ENCODE measurements at regions of chr11 and their contacts with region 1.

Region 1: GRCh38 chr11:33970984-33971466 is 79.1 kb upstream of the LMO2 start:
- DNase-seq: peak; percentile 74 to 80 (median 75)
- H3K4me3 ChIP-seq: no peak overlapping the region
- H3K27ac ChIP-seq: no peak overlapping the region
- H3K4me1 ChIP-seq: peaks cover 2 to 8% (median 8%) of the 10 kb centered on the region in 4 experiments
- H3K27me3 ChIP-seq: no peaks in the 10 kb centered on the region

Region 2: GRCh38 chr11:33655842-33656600 is 315.0 kb before region 1 on chr11:
- CTCF ChIA-PET with region 1: no interaction called
- POLR2A ChIA-PET with region 1: no interaction called
- DNase-seq: no peak
- H3K4me3 ChIP-seq: no peak overlapping the region
- H3K27ac ChIP-seq: no peak overlapping the region
- H3K4me1 ChIP-seq: no peaks in the 10 kb centered on the region
- H3K27me3 ChIP-seq: peaks cover 0 to 5% (median 0%) of the 10 kb centered on the region in 5 experiments

Region 3: GRCh38 chr11:33857933-33858371 is 113.1 kb before region 1 on chr11:
- CTCF ChIA-PET with region 1: interaction called, 409 read pairs
- POLR2A ChIA-PET with region 1: no interaction called
- DNase-seq: peak; percentile 85 to 91 (median 87)
- H3K4me3 ChIP-seq: no peak overlapping the region
- H3K27ac ChIP-seq: no peak overlapping the region
- H3K4me1 ChIP-seq: peaks cover 0 to 39% (median 13%) of the 10 kb centered on the region in 4 experiments
- H3K27me3 ChIP-seq: no peaks in the 10 kb centered on the region

Region 4: GRCh38 chr11:33874910-33875490 is 96.0 kb before region 1 on chr11:
- CTCF ChIA-PET with region 1: interaction called, 55 read pairs
- POLR2A ChIA-PET with region 1: interaction called, 4 read pairs
- DNase-seq: no peak
- H3K4me3 ChIP-seq: peak overlapping the region in 2 of 7 experiments; percentile 50 to 52
- H3K27ac ChIP-seq: peak overlapping the region in 1 of 2 experiments; percentile 91
- H3K4me1 ChIP-seq: peaks cover 29 to 91% (median 68%) of the 10 kb centered on the region in 4 experiments
- H3K27me3 ChIP-seq: no peaks in the 10 kb centered on the region

Region 5: DNA sequence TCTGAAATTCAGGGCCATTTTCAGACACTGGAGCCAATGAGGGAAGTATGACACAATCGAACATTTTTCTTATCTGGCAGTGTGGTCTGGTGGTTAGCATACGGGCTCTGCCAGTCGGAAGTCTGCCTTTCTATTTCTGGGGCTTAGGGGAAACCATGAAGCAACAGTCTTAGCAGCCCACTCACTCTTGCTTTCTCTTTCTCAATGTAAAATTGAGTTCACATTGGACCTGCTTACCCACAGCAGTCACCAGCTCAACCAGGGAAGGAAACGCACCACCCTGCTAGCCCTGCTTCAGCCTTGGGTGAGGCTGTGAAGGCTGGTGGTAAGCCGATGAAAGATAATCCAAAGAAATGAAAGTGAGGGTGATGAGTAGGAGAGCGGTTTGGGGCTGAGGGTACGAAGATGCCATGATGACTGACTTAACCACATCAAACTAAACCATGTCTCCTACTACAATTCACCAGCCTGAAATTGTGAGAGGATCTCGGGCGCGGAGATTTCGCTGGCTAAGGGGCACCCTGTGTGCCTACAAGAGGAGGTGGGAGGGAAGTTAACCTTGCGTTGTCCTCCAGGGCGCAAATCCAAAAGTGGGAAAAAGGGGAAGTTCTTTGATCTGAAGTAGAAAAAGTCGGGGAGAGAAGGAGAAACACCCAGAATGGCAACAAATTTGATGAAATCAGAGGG is 77.2 kb before region 1 on chr11:
- CTCF ChIA-PET with region 1: interaction called, 16 read pairs
- POLR2A ChIA-PET with region 1: interaction called, 4 read pairs
- DNase-seq: peak; percentile 93 to 99 (median 98)
- H3K4me3 ChIP-seq: peak overlapping the region in 6 of 7 experiments; percentile 43 to 85 (median 60)
- H3K27ac ChIP-seq: peak overlapping the region; percentile 71 to 91
- H3K4me1 ChIP-seq: peaks cover 48 to 98% (median 88%) of the 10 kb centered on the region in 4 experiments
- H3K27me3 ChIP-seq: no peaks in the 10 kb centered on the region

Region 6: GRCh38 chr11:33936725-33937604 is 34.1 kb before region 1 on chr11:
- CTCF ChIA-PET with region 1: interaction called, 34 read pairs
- POLR2A ChIA-PET with region 1: no interaction called
- DNase-seq: peak in 2 of 3 donors; percentile 56 to 68
- H3K4me3 ChIP-seq: peak overlapping the region in 3 of 7 experiments; percentile 5 to 27 (median 6)
- H3K27ac ChIP-seq: peak overlapping the region in 1 of 2 experiments; percentile 63
- H3K4me1 ChIP-seq: peaks cover 12 to 66% (median 58%) of the 10 kb centered on the region in 4 experiments
- H3K27me3 ChIP-seq: no peaks in the 10 kb centered on the region

Region 7: DNA sequence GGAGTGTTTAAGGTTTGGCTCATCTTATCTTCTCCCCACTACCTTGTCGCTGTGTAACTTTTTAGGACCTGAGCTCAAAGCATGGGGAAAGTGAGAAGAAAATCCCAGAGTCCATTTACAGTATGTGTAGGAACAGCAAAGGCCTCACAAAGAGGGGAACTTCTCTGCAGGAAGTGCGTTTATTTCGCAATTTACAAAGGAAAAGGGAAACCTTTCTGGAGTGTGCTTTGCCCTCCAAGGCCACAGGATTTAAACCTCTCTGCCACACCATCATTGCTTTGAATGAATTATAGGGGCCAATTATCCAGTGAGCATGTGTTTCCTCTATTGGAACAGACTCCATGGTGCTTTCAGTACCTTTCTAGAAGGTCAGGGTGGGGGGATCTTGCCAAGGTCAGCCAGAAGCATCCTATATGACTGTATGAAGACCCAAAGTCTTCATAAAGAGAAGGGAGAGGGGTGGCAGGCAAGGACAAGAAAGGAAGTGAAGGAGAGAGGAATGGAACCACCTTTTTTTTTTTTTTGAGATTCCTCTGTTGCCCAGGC is 11.1 kb before region 1 on chr11:
- CTCF ChIA-PET with region 1: interaction called, 20 read pairs
- POLR2A ChIA-PET with region 1: no interaction called
- DNase-seq: peak in 1 of 3 donors; percentile 16
- H3K4me3 ChIP-seq: no peak overlapping the region
- H3K27ac ChIP-seq: no peak overlapping the region
- H3K4me1 ChIP-seq: peaks cover 1 to 16% (median 13%) of the 10 kb centered on the region in 4 experiments
- H3K27me3 ChIP-seq: no peaks in the 10 kb centered on the region